ENCODE measurements at regions of chr9 and their contacts with region 1.

Region 1: DNA sequence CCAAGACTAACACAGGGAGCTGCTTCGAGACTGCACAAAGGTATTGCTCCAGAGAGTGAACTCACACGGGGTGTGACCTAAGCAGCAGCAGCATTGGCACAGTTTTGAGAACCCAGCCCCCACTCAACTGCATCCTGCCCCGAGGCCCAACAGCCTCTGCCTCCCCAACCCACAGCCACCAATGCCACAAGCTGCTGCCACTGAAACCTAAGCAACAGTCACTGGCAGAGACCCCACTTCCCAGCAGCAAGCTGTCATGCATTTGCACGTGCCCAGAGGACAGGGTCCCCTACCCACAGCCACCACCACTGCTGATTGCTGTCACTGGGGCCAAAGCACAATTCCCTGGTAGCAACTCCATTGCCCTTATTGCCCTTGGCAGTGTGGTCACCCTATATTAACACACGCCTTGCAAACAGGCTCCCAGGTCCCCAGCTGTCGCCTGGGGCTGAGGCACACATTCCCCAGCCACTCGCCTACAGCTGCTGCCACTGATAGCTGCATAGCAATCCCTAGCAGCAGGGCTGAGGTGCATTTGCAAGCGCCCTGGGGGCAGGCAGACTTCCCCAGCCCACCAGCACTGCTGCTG is 141.0 kb downstream of the AGTPBP1 start:
- DNase-seq: peak in 2 of 5 donors; percentile 29 to 46
- ATAC-seq: peak; percentile 19 to 80 (median 76)
- H3K4me3 ChIP-seq: no peak overlapping the region
- H3K27ac ChIP-seq: no peak overlapping the region
- H3K4me1 ChIP-seq: peaks cover 0 to 23% (median 7%) of the 10 kb centered on the region in 12 donors
- H3K27me3 ChIP-seq: no peaks in the 10 kb centered on the region
- CTCF ChIP-seq: no peak
- POLR2A ChIP-seq: no peak

Region 2: GRCh38 chr9:84404095-84404686 is 1196.6 kb before region 1 on chr9:
- intact Hi-C with region 1: loop called in 3 of 10 experiments (anchors 5 to 10 kb)
- DNase-seq: no peak
- ATAC-seq: no peak
- H3K4me3 ChIP-seq: no peak overlapping the region
- H3K27ac ChIP-seq: no peak overlapping the region
- H3K4me1 ChIP-seq: no peaks in the 10 kb centered on the region
- H3K27me3 ChIP-seq: no peaks in the 10 kb centered on the region
- CTCF ChIP-seq: peak; percentile 43 to 64 (median 56)
- POLR2A ChIP-seq: no peak

Region 3: GRCh38 chr9:84970432-84970831 is 630.3 kb before region 1 on chr9:
- intact Hi-C with region 1: loop called in 1 of 10 experiments (anchors 10 kb)
- DNase-seq: no peak
- ATAC-seq: no peak
- H3K4me3 ChIP-seq: no peak overlapping the region
- H3K27ac ChIP-seq: no peak overlapping the region
- H3K4me1 ChIP-seq: no peaks in the 10 kb centered on the region
- H3K27me3 ChIP-seq: peaks cover 0 to 20% (median 0%) of the 10 kb centered on the region in 9 donors
- CTCF ChIP-seq: no peak
- POLR2A ChIP-seq: no peak

Region 4: DNA sequence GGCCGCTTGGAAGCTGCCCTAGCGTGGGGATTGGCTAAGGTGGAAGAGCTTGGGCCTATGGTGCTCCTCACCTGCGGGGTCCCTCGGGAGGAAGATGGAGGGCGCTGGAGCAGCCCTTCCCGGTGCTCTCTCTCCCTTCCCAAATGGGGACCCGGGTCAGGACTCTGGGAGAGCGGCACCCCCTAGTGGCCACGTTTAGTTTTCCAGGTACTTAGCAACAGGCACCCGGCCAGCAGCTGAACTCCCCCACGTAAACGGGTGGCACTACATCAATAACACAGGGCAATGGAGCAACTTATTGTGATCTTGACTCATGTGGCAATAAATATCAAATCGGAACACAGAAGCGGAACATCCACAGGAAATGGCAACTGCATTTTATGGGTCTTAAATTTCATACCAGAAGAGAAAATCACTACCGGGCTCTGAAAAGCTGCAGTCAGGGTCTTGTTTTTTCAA is 175.6 kb before region 1 on chr9:
- intact Hi-C with region 1: loop called in 1 of 10 experiments (anchors 10 kb)
- DNase-seq: peak in 4 of 5 donors; percentile 34 to 54 (median 42)
- ATAC-seq: peak in 2 of 4 donors; percentile 42 to 51
- H3K4me3 ChIP-seq: no peak overlapping the region
- H3K27ac ChIP-seq: no peak overlapping the region
- H3K4me1 ChIP-seq: peaks cover 0 to 3% (median 0%) of the 10 kb centered on the region in 12 donors
- H3K27me3 ChIP-seq: peaks cover 0 to 10% (median 0%) of the 10 kb centered on the region in 9 donors
- CTCF ChIP-seq: peak; percentile 33 to 70 (median 54)
- POLR2A ChIP-seq: no peak

Measured in heart left ventricle (tissue), 16 donors.